CD14-positive monocyte (primary cell): ENCODE measurements at regions of chr11 and their contacts with region 1.

Region 1: DNA sequence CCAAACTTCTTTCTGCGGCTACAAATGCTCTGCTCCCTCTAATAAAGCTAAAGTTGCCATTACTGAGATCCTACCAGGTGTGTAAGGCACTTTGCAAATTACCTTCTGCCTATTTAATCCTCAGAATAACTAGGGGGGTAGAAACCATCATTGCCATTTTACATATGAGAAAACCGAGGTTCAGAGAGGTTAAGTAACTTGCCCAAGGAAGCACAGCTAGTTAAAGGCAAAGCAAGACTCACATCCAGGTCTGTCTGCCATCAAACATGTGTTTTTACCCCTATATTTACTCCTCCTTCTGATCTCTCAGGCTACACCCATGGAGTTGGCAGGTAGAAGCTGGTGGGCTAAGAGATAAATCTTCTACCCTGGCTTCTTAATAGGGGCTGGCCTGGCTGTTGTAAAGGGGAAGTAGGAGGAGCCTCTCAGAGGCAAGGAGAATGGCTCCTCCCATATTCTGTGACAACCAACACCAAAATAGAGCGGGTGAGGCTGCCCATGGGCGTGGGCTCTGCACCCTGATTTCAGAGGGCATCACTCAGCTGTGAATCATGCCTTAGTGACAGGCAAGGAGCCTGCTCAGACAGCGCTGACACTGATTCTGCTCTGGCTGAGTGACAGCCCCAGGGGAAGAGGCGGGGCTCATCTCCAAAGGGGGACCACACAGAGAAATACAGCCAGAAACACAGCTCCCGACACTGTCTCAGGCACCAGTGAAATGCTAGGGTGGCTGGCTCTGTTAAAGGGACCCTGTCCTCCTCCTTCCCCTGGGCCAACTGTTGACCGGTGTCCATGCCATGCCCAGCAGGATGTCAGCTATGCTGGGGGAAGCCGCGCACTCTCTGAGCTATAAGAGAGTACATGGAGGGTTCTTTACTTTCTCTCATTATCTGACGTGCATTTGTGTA is 106.8 kb downstream of the ABTB2 start:
- DNase-seq: peak; percentile 95 to 97 (median 97)
- H3K4me3 ChIP-seq: peak overlapping the region in 2 of 3 experiments; percentile 2 to 61
- H3K4me3 Mint-ChIP-seq: peak overlapping the region; percentile 54 to 72
- H3K27ac ChIP-seq: peak overlapping the region; percentile 33 to 88
- H3K27ac Mint-ChIP-seq: peak overlapping the region; percentile 68 to 95 (median 87)
- H3K4me1 ChIP-seq: peaks cover 23 to 32% of the 10 kb centered on the region in 2 donors
- H3K4me1 Mint-ChIP-seq: peaks cover 33% of the 10 kb centered on the region
- H3K27me3 ChIP-seq: no peaks in the 10 kb centered on the region
- H3K27me3 Mint-ChIP-seq: peaks cover 0 to 2% (median 2%) of the 10 kb centered on the region in 3 donors
- CTCF ChIP-seq: no peak

Region 2: DNA sequence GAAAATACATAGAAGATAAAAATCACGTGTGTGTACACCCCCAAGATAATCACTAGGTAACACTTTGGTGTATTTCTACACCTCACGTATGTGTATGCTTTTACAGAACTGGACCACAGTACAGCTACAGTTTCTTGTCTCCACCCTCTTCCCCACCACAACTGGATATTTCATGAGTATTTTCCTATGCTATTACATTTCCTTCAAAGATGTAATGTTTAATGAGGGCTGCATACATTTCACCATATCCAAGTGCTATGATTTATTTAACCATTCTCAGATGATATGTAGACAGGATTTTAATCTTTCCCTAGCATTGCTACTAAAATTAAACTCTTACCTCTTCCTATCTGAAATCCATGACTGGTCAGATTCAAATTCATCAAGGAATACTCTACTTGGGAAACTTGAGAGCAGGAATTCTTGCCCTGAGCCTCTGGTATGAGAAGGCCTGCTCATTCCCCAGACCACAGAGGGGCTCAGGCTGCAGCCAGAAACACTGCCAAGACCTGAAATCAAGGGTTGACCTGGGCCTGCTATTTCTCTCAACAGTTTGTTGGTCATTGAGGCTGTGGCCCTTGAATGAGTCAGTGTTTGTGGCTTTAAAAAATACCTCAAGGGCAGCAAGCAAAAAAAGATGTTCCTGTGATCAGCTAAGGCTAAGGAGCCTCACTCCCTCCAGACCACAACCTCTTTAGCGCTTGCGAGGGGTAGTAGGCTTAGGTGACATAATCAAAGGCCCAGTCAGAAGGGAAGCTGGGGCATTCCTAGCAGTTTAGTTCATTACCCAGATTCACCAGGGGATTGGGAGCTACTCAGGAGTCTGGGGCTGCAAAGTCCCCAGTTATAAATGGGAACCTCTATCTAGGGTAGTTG is 51.3 kb after region 1 on chr11:
- intact Hi-C with region 1: loop called in 1 of 2 experiments (anchors 10 kb)
- DNase-seq: peak in 1 of 3 donors; percentile 52
- H3K4me3 ChIP-seq: no peak overlapping the region
- H3K4me3 Mint-ChIP-seq: no peak overlapping the region
- H3K27ac ChIP-seq: peak overlapping the region in 1 of 2 donors; percentile 81
- H3K27ac Mint-ChIP-seq: peak overlapping the region in 2 of 7 donors; percentile 26 to 37
- H3K4me1 ChIP-seq: peaks cover 31 to 33% of the 10 kb centered on the region in 2 donors
- H3K4me1 Mint-ChIP-seq: peaks cover 32% of the 10 kb centered on the region
- H3K27me3 ChIP-seq: no peaks in the 10 kb centered on the region
- H3K27me3 Mint-ChIP-seq: no peaks in the 10 kb centered on the region
- CTCF ChIP-seq: no peak